ENCODE measurements at regions of chr19 and their contacts with region 1.

Region 1: GRCh38 chr19:9075064-9075949 is 11.6 kb upstream of the OR1M1 start:
- DNase-seq: peak; percentile 69
- ATAC-seq: peak; percentile 91

Region 2: DNA sequence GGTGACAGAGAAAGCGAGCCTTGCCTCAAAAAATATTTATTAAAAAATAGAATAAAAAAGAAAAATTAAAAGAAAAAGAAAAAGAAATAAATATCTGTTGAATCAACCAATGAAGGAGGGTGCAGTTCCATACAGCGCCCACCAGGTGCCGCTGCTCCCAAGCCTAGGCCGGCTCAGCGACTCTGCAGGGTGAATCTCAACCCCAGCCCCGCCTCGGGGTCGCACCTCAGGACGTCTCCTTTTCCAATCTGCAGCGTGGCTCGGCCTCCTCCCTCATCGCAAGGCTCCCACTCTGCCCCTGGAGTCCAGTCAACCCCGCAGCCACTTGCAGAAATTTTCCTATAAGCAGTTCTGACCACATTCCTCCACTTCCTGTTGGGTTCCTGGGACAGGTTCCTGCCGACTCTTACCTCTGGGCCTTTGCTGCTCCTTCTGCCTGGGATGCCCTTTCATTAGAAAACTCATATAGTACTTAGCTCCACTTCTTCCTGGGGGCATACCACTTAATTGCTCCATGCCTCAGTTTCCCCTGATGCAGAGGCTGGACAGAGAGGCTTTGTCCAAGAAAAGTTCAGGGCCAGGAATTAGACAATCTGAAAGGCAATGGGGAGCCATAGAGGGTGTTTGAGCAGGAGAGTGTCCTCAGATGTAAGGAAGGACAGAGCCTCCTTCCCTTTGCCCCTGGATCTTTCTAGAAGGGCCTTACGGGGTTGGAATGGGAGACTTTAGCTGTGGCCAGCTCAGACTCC is 420.5 kb before region 1 on chr19:
- intact Hi-C with region 1: loop called (anchors 10 kb)
- DNase-seq: peak; percentile 75
- ATAC-seq: peak; percentile 77

Region 3: GRCh38 chr19:9043544-9043943 is 31.8 kb before region 1 on chr19:
- intact Hi-C with region 1: no loop called
- DNase-seq: no peak
- ATAC-seq: no peak

Region 4: DNA sequence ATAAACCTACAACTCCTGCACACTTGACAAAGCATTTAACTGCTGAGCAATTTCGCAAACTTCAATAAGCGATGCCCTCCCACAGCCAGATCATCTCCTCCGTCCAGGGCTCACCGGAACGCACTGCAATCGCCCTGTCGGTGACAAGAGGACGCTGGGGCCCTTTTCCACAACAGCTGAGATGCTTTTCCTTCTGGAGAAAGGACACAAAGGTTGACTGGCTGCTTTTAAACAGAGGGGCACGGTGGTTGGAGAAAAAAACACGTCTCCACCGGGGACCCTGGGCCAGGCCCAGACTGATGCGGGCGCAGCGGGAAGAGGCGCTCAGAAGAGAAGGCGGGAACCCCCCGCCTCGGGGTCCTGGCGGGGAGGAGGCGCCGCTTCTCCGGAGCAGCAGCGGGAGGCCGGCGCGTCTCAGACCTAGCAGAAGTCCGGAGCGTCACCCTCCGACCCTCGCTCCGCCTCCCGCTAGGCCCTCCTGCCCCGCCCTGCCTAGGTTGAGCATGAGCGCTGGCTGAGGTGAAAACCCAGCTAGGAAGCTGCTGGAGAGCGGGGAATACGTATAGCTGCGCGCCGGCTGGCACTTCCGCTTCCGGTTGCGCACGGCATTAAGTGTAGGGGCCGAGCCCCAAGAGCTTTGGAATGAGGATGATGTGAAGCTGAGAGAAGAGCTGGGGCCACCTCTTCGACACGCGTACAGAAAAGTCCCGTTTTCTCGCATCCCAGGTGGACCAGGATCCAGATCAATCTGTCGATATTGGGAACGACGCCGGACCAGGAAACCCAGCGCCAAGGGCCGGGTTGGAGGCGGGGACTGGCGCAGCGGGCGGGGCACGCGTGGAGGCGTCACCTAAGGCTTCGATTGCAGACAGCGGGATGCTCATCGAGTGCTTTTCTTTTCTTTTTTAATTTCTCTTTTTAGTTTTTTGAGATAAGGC is 693.1 kb after region 1 on chr19 and contains the start of gene ZNF846:
- intact Hi-C with region 1: no loop called
- DNase-seq: peak; percentile 94
- ATAC-seq: peak; percentile 100
- total RNA-seq, gene ZNF846: 27.0 TPM

Measured in sciatic nerve (tissue), 2 donors.